Uterus (tissue), 4 donors: ENCODE measurements at regions of chr13 and their contacts with region 1.

Region 1: GRCh38 chr13:23871616-23872220 is 17.5 kb downstream of the MIPEP start:
- DNase-seq: no peak
- H3K4me3 ChIP-seq: no peak overlapping the region
- H3K27ac ChIP-seq: no peak overlapping the region
- H3K4me1 ChIP-seq: no peaks in the 10 kb centered on the region
- H3K27me3 ChIP-seq: no peaks in the 10 kb centered on the region
- CTCF ChIP-seq: peak; percentile 56 to 74 (median 60)
- POLR2A ChIP-seq: no peak

Region 2: GRCh38 chr13:23466144-23467002 is 405.3 kb before region 1 on chr13:
- intact Hi-C with region 1: loop called (anchors 10 kb)
- DNase-seq: peak; percentile 72 to 73
- H3K4me3 ChIP-seq: peak overlapping the region; percentile 43 to 46
- H3K27ac ChIP-seq: peak overlapping the region; percentile 84 to 88
- H3K4me1 ChIP-seq: no peaks in the 10 kb centered on the region
- H3K27me3 ChIP-seq: no peaks in the 10 kb centered on the region
- CTCF ChIP-seq: peak; percentile 50 to 77 (median 61)
- POLR2A ChIP-seq: peak in 1 of 2 donors; percentile 20